Calu3 (cell line): ENCODE measurements at regions of chr15 and their contacts with region 1.

Region 1: DNA sequence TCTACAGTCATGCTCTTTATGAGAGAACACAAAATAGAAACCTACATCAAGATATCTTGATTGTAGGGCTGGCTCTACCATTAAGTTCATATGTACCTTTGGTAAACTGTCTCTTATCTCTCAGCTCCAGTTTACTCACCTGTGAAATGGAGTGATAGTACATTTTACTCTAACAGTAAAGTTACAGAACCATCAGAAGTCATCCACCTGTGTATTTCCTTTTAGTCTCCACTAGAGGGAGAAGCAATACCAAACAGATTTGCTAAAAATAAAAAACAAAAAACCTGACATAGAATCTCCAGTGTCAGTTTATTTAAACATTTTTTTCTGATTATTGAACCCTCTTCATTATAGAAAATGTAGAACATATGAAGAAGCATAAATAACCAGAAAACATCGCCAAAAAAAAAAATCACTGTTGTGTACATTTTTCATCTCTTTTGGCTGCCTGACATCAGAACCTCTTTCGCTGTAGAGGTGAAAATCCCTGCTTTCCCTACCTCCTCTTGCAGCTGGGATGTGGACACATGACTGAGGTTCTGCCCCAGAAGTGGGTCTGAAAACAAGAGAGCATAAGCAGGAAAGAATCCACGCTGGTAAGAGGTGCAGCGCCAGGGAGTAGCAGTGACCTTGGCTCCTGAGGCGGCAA is 48.7 kb upstream of the WDR72 start:
- DNase-seq: no peak
- H3K4me3 Mint-ChIP-seq: no peak overlapping the region
- H3K27ac Mint-ChIP-seq: no peak overlapping the region
- H3K4me1 Mint-ChIP-seq: peaks cover 20% of the 10 kb centered on the region
- H3K27me3 Mint-ChIP-seq: no peaks in the 10 kb centered on the region
- CTCF ChIP-seq: peak; percentile 24

Region 2: DNA sequence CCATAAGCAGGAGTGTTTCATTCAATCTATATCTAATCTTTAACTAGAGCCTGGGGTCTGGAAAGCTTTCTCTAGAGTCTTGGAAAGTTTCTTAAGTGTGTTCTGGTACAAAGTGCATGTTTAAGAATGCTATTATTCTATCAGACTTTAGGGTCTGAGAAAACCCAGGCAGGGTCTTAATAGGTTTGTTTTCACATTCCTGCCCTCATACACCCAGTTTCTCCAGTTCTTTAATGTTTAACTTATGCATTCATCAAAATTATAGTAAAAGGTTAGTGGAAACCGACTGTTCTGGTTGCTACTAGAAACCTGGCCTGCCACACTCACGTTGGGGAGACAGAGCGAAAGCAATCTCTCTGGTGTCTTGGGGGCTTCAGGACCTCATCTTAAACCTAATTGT is 54.2 kb after region 1 on chr15:
- CTCF ChIA-PET with region 1: interaction called, 8 read pairs
- intact Hi-C with region 1: loop called (anchors 2 kb)
- DNase-seq: peak; percentile 18
- H3K4me3 Mint-ChIP-seq: peak overlapping the region; percentile 41
- H3K27ac Mint-ChIP-seq: peak overlapping the region; percentile 77
- H3K4me1 Mint-ChIP-seq: peaks cover 37% of the 10 kb centered on the region
- H3K27me3 Mint-ChIP-seq: no peaks in the 10 kb centered on the region
- CTCF ChIP-seq: no peak

Region 3: GRCh38 chr15:53962332-53963241 is 154.4 kb after region 1 on chr15:
- CTCF ChIA-PET with region 1: interaction called, 15 read pairs
- intact Hi-C with region 1: loop called (anchors 2 kb)
- DNase-seq: peak; percentile 67
- H3K4me3 Mint-ChIP-seq: no peak overlapping the region
- H3K27ac Mint-ChIP-seq: no peak overlapping the region
- H3K4me1 Mint-ChIP-seq: no peaks in the 10 kb centered on the region
- H3K27me3 Mint-ChIP-seq: no peaks in the 10 kb centered on the region
- CTCF ChIP-seq: peak; percentile 73

Region 4: GRCh38 chr15:54273928-54274327 is 465.7 kb after region 1 on chr15:
- CTCF ChIA-PET with region 1: no interaction called
- intact Hi-C with region 1: loop called (anchors 5 kb)
- DNase-seq: peak; percentile 5
- H3K4me3 Mint-ChIP-seq: no peak overlapping the region
- H3K27ac Mint-ChIP-seq: no peak overlapping the region
- H3K4me1 Mint-ChIP-seq: no peaks in the 10 kb centered on the region
- H3K27me3 Mint-ChIP-seq: no peaks in the 10 kb centered on the region
- CTCF ChIP-seq: no peak

Region 5: DNA sequence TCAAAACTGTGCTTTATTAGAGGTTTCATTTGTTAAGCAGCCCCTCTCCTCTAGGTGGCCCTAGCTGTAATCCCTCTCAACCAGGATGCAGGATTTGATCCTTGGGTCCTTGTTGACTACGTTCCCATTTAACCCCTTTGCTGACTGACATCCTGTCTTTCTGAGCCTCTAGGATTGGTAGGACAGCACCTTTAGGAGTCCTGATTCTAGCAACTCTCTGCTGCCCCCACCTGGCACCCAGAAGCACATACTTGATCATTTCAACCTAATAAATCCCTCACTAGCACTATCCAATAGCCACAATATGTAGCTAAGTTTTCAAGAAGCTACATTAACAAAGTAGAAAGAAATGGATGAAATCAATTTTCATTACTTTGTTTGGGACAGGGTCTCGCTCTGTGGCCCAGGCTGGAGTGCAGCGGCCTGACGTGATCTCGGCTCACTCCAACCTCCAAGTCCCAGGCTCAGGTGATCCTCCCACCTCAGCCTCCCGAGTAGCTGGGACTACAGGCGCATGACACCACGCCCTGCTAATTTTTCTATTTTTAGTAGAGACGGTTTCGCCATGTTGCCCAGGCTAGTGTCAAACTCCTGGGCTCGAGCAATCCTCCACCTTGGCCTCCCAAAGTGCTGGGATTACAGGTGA is 1360.3 kb after region 1 on chr15:
- CTCF ChIA-PET with region 1: no interaction called
- intact Hi-C with region 1: loop called (anchors 10 kb)
- DNase-seq: peak; percentile 83
- H3K4me3 Mint-ChIP-seq: no peak overlapping the region
- H3K27ac Mint-ChIP-seq: no peak overlapping the region
- H3K4me1 Mint-ChIP-seq: peaks cover 9% of the 10 kb centered on the region
- H3K27me3 Mint-ChIP-seq: no peaks in the 10 kb centered on the region
- CTCF ChIP-seq: peak; percentile 90